Caco-2 (cell line): ENCODE measurements at regions of chr6 and their contacts with region 1.

Region 1: DNA sequence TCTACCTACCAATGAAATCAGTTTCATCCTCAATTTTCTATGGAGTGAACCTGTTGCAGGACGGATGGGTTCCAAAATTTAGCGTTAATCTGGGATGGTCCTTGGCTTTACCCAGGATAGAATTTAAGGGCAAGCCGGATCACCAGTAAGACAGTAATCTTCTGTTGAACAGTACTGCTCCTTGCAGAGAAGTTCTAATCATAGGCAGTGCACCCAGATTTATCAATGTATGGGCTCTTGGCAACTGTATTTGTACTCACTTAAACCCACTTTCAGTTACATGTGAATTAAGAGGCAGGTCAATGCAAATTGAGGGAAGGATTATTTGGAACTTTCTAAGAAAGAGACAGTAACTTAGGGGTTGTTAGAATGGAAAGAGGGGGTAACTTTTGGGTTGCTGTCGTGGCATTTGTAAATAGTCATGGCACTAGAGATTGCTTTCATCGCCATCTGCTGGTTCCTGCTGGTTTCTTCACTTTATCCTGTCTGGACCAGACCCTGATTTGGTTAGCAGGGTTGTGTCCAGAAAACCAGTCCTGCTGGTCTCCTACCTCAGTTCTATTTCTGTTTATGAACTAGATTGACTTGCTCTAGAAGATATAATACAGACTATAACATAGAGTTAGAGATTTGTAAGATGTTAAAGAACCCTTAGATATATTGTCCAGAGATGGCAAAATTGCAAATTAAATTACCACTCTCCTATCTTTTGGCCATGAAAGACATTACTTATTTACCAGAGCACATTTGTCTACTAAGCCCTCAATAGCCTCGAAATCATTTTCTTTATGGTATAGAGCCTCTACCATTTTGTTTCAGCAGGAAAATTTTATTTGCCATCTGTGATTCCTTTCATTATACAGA is 646.3 kb downstream of the UTRN start:
- DNase-seq: peak; percentile 47 to 50
- H3K4me3 ChIP-seq: no peak overlapping the region
- H3K4me3 Mint-ChIP-seq: no peak overlapping the region
- H3K27ac Mint-ChIP-seq: no peak overlapping the region
- H3K4me1 ChIP-seq: no peaks in the 10 kb centered on the region
- H3K4me1 Mint-ChIP-seq: no peaks in the 10 kb centered on the region
- H3K27me3 ChIP-seq: no peaks in the 10 kb centered on the region
- H3K27me3 Mint-ChIP-seq: peaks cover 4% of the 10 kb centered on the region
- CTCF ChIP-seq: peak; percentile 60 to 61

Region 2: DNA sequence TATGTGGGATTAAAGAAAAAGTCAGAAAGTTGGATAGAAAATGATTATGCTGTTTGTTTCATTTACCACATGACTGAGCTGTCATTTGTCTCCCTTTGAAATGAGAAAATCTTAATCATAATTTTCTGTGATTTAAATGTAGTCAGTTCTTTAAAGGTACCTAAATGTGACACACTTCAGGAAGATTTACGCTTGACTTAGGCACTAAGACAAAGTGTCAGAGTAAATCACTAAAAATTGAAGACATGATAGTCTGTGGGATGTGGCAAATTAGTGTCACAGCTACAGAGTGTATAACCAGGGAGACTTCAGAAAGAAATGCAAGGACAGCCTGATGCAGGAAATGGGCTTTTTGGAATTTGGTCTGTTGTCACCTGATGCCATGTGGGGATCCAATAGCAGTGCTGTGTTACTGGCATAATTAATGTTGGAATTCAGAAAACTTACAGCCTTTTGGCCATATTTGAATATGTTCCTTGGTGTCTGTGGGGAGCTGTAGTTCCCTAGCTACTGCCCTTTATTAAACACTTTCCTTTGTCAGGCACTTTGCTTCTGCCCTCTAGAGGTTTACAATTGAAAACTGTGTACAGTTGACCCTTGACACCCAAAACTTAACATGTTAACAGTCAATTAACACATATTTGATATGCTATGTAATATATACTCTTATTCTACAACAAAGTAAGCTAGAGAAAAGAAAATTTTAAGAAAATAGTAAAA is 152.5 kb before region 1 on chr6:
- CTCF ChIA-PET with region 1: no interaction called
- POLR2A ChIA-PET with region 1: no interaction called
- intact Hi-C with region 1: loop called (anchors 10 kb)
- DNase-seq: peak in 1 of 2 experiments; percentile 3
- H3K4me3 ChIP-seq: no peak overlapping the region
- H3K4me3 Mint-ChIP-seq: no peak overlapping the region
- H3K27ac Mint-ChIP-seq: no peak overlapping the region
- H3K4me1 ChIP-seq: no peaks in the 10 kb centered on the region; the same call in 1 of the 2 replicates
- H3K4me1 Mint-ChIP-seq: peaks cover 22% of the 10 kb centered on the region
- H3K27me3 ChIP-seq: no peaks in the 10 kb centered on the region
- H3K27me3 Mint-ChIP-seq: no peaks in the 10 kb centered on the region
- CTCF ChIP-seq: peak; percentile 29 to 45

Region 3: DNA sequence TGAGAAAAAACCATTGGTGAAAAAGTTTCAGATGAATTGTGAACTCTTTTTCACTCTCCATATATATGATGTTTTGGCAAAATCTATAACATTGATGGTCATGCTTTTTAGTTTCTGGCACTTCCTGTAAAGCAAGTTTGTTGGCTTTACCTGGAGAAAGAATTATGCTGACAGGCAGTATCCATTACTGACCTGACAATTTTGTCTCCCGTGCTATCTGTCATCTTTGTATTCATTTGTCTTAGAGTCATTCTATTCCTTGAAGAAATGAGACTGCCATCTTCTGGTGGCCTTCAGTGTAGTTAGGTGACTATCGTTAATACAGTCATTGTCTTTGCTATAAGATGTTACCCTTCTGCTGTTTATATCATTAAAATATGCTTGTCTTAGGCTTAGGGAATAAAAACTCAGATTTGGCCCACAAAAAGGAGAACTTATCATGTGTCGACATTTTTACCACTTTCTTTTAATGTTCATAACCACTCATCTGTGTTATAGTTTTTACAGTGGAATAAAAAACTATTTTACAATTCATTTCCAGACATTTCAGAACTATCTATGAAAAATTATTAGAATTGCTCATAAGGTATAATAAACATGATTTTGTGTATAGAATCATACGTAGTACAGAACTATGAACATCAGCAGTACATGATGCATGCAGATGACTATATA is 96.9 kb after region 1 on chr6:
- CTCF ChIA-PET with region 1: no interaction called
- POLR2A ChIA-PET with region 1: no interaction called
- intact Hi-C with region 1: loop called (anchors 5 kb)
- DNase-seq: peak in 1 of 2 experiments; percentile 24
- H3K4me3 ChIP-seq: no peak overlapping the region
- H3K4me3 Mint-ChIP-seq: no peak overlapping the region
- H3K27ac Mint-ChIP-seq: no peak overlapping the region
- H3K4me1 ChIP-seq: peaks cover 8% of the 10 kb centered on the region; the same call in 1 of the 2 replicates
- H3K4me1 Mint-ChIP-seq: peaks cover 6% of the 10 kb centered on the region
- H3K27me3 ChIP-seq: no peaks in the 10 kb centered on the region
- H3K27me3 Mint-ChIP-seq: peaks cover 5% of the 10 kb centered on the region
- CTCF ChIP-seq: peak; percentile 56 to 70

Region 4: GRCh38 chr6:145075425-145075824 is 144.0 kb after region 1 on chr6:
- CTCF ChIA-PET with region 1: no interaction called
- POLR2A ChIA-PET with region 1: no interaction called
- intact Hi-C with region 1: no loop called
- DNase-seq: no peak
- H3K4me3 ChIP-seq: no peak overlapping the region
- H3K4me3 Mint-ChIP-seq: no peak overlapping the region
- H3K27ac Mint-ChIP-seq: no peak overlapping the region
- H3K4me1 ChIP-seq: no peaks in the 10 kb centered on the region
- H3K4me1 Mint-ChIP-seq: no peaks in the 10 kb centered on the region
- H3K27me3 ChIP-seq: no peaks in the 10 kb centered on the region; the same call in 1 of the 2 replicates
- H3K27me3 Mint-ChIP-seq: peaks cover 5% of the 10 kb centered on the region
- CTCF ChIP-seq: no peak